ENCODE measurements at regions of chr12 and their contacts with region 1.

Region 1: DNA sequence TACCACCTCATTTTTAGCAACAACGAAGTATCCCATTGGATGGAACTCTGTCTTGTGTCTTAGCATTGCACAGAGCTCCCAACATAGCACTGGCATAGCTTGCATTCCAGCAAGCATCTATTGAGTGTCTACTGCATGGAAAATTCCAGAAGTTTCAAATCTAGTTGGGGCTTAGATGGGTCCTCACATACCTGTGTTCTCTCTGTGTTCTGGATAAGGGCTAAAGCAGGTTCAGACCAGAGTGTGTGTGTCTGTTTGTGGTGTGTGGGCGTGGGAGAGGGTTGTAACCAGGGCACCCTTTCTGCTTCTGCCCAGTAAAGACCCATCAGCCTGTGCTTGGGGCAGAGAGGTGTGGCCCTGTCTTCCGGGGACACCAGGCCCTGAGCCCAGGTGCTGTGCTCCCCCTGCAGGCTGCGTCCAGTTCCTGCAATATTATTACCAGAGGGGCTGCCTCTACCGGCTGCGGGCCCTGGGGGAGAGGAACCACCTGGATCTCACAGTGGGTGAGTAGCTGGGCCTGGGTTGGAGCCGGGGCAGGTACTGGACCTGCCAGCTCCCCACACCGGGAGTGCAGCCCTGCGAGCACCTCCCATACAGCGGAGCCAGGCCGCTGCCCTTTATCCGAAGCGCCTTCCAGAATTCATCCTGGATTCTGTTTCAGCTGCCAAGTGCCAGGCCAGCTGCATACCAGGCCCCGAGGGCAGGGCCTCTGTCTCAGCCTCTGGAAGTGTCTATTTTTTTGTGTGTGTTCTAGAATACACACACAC is 20.3 kb downstream of the RHOF start:
- DNase-seq: peak; percentile 94
- H3K4me3 Mint-ChIP-seq: no peak overlapping the region
- H3K27ac Mint-ChIP-seq: no peak overlapping the region
- H3K4me1 Mint-ChIP-seq: peaks cover 9% of the 10 kb centered on the region
- H3K27me3 Mint-ChIP-seq: no peaks in the 10 kb centered on the region

Region 2: DNA sequence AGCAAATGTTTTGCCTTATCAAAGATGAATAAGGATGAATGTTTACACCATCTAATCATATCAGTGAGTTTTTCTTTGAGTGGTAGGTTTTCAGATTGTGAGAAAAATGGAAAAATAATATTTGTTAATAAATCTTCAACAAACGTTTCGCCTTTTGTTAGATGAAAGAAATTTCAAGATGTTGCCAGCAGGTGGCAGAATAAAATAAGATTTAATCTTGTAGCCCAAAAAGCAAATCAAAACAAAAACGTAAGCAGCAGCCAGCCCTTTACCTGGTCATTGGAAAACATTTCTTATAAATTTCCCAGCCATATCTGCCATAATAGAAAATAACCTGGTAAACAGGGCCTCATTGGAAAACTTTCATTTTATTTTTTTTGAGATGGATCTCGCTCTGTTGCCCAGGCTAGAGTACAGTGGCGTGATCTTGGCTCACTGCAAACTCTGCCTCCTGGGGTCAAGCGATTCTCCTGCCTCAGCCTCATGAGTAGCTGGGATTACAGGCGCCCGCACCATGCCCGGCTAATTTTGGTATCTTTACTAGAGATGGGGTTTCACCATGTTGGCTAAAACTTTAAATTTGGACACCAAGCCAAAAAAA is 76.0 kb before region 1 on chr12:
- intact Hi-C with region 1: loop called (anchors 1 kb)
- DNase-seq: peak; percentile 84
- H3K4me3 Mint-ChIP-seq: no peak overlapping the region
- H3K27ac Mint-ChIP-seq: no peak overlapping the region
- H3K4me1 Mint-ChIP-seq: no peaks in the 10 kb centered on the region
- H3K27me3 Mint-ChIP-seq: peaks cover 8% of the 10 kb centered on the region

Region 3: GRCh38 chr12:121712461-121713256 is 60.5 kb before region 1 on chr12 and contains the start of gene TMEM120B:
- intact Hi-C with region 1: loop called (anchors 5 kb)
- DNase-seq: peak; percentile 96
- H3K4me3 Mint-ChIP-seq: peak within 1 kb of the TSS; percentile 90
- H3K27ac Mint-ChIP-seq: peak within 1 kb of the TSS; percentile 96
- H3K4me1 Mint-ChIP-seq: peaks cover 25% of the 10 kb centered on the region
- H3K27me3 Mint-ChIP-seq: no peaks in the 10 kb centered on the region
- total RNA-seq, gene TMEM120B: 17.1 and 18.4 TPM in 2 replicates

Region 4: GRCh38 chr12:121811434-121812319 is 38.5 kb after region 1 on chr12:
- intact Hi-C with region 1: loop called (anchors 1 kb)
- DNase-seq: peak; percentile 93
- H3K4me3 Mint-ChIP-seq: peak overlapping the region; percentile 83
- H3K27ac Mint-ChIP-seq: peak overlapping the region; percentile 35
- H3K4me1 Mint-ChIP-seq: peaks cover 35% of the 10 kb centered on the region
- H3K27me3 Mint-ChIP-seq: no peaks in the 10 kb centered on the region